ENCODE measurements at regions of chr7 and their contacts with region 1.

Region 1: DNA sequence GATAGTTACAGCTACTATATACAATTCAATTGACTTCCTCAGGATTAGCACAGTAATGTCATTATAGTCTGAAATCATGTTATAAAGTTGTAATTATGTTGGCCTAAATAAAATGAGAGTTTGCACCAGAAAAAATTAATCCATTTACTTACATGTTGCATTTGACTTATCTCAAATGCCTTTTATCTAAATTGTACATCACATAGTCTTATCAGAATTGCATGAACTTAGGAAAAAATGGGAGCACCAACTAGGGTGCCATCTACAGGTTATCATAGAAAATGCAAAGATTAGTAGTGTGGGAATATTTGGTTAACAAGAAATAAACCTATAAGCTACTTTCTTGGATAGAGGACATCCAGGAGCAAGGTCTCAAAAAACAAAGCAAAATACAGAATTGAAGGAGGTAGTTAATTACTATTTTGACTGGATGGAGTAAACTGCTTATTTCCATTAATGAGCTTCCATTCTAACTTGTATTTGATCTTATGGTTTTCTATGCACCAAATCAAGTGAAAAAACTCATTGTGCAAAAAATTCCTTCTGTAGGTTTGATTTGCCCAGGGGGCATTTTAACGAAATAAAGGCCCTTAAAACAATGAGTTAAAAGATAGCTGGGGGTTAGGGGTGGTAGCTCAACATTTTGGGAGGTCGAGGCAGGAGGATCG is 60.0 kb upstream of the ORC5 start:
- DNase-seq: no peak
- H3K4me3 ChIP-seq: no peak overlapping the region
- H3K27ac ChIP-seq: no peak overlapping the region
- H3K27me3 ChIP-seq: no peaks in the 10 kb centered on the region
- CTCF ChIP-seq: peak; percentile 69

Region 2: DNA sequence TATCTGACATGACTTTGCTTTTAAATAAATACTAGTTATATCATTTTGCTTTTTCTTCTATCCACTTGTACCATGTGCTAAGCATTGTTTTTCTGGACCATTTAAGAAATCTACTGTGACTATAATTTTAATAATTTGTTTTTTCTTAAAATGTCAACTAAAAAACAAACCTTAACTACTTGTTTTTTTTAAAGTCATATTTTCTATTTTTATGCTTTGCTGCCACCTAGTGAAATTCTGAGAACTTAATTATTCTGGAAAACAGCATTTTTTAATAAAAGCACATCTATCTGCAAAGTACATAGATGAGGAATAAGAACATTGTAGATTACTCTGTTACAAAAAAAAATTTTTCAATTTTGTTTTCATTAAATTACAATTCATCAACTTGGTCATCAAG is 107.5 kb before region 1 on chr7:
- CTCF ChIA-PET with region 1: no interaction called
- POLR2A ChIA-PET with region 1: no interaction called
- DNase-seq: no peak
- H3K4me3 ChIP-seq: no peak overlapping the region
- H3K27ac ChIP-seq: no peak overlapping the region
- H3K27me3 ChIP-seq: no peaks in the 10 kb centered on the region
- CTCF ChIP-seq: peak; percentile 43

Region 3: DNA sequence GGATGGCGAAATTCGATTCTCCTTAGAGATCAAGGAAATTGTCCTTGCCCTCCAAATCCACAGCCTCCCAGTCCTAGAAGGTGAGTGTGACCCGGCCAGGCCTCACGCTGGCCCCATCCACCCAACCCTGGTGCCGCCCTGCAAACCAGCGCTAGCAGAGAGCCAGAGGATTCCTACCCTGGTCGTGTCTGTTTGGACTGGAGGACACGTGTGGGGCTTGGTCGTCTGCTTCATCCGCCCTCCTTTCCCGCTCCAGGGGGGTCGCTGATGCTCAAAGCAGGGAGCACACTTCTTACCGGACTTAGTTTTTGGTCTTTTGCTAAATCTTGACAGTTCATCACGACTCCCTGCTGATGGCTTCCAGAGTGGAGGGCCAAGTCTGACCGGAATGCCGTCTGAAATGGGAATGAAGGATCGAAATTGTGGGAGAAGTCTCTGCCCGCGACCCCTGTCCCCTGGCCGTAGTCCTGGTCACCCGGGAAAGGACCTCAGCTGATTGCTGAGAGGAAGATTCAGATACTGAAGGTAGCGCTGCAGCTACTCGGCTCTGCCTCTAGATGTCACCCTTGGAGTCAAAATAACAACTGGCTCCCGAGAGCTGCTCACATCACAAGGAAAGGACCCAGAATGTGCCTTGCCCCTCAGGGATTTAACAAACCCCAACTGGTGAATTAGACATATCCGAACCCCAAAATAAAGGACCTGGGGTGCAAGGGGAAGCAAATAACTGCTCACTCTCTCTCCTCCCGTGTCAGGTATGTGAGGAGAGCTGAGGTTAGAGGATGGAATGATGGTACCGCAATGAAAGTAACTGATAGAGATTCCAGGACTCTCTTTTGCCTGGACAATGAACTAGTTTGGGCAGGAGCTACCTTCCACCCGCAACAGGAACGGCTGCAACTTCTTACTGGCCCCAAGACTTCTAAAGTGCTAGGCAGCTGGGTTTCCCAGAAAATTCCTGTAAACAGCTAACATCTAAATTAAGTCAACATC is 36.5 kb before region 1 on chr7:
- CTCF ChIA-PET with region 1: interaction called, 150 read pairs
- POLR2A ChIA-PET with region 1: no interaction called
- DNase-seq: peak; percentile 30
- H3K4me3 ChIP-seq: peak overlapping the region; percentile 38
- H3K27ac ChIP-seq: no peak overlapping the region
- H3K27me3 ChIP-seq: peaks cover 6% of the 10 kb centered on the region
- CTCF ChIP-seq: peak; percentile 93

Measured in AG04450 (cell line).